ENCODE measurements at regions of chr15 and their contacts with region 1.

Region 1: DNA sequence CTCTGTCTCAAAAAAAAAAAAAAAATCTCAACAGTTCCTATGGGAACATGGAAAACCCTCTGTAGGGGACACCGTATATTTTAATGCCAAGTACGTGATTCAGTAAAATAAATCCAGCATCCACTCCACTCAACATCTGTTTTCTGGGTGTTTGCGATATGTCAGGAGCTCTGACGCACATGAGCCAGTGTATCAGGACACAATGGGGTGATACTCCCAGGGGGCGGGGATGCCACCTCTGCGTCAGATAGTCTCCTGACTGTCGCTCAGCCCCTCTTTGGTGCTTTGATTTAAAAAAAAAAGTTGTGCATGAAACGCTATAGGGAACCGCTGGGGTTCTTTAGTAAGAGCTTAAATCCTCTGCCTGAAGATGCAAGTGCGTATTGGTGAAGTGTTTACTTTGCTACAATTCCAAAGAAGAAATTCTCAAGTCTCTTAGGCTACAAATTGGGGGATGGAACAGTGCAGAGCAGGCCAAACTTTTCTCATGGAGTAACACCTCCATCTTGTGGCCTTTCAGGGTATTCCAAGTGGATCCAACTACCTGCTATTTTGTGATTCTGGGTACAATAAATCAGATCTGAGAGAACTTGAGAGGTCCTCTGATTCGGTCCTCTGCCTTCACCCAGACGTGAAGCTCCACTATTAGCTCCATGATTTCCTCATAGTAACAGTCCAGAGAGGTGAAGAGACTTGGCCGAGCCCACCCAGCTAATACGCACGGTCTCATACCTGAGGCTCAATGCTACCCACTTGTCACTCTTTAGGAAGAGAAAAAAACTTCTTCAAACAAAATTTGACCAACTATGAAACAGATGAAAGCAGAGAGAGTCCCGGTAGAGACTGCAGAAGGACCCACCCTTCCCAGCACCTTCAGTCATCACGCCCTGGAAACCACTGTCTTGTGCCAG is 9.3 kb upstream of the NR2E3 start:
- DNase-seq: peak; percentile 47
- ATAC-seq: peak; percentile 73
- H3K4me3 ChIP-seq: no peak overlapping the region
- H3K27ac ChIP-seq: no peak overlapping the region
- H3K4me1 ChIP-seq: no peaks in the 10 kb centered on the region
- H3K27me3 ChIP-seq: peaks cover 0 to 5% of the 10 kb centered on the region in 2 experiments; a peak in 2 of 5 replicates
- CTCF ChIP-seq: peak; percentile 79
- EP300 ChIP-seq: no peak
- POLR2A ChIP-seq: no peak
- RAD21 ChIP-seq: peak; percentile 73

Region 2: DNA sequence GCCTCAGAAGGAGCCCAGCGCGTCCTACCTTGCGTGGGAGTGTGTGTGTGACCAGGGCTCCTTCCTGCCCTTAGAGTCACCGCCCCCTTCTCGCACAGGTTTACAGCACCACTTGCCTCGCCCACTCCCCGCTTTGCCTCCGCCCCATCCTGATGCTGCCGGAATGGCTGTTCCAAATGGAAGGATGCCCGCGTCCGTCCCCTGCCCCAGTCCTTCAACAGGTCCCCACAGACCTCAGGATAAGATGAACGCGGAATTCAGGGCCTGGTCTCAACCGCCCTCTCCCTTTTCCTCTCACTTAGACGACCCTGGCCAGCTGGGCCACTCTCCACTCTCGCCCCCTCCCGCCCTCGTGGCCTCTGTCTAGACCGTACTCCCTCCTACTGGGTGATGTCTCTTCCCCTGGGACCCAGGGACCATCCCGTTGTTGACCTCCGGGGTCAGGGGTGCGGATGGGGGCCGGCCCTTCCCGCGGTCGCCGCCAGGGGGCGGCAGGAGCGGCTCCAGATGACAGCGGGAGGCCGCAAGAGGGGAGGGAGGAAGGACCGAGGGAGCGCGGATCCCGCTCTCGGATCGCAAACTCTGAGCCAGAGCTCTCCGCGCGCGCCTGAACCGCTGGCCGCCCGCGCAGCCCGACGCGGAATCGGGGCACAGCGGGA is 686.1 kb before region 1 on chr15 and contains the start of gene THSD4:
- CTCF ChIA-PET with region 1: interaction called, 3 read pairs
- POLR2A ChIA-PET with region 1: no interaction called
- in situ Hi-C with region 1: loop called (anchors 10 kb)
- intact Hi-C with region 1: no loop called
- DNase-seq: peak; percentile 25
- ATAC-seq: peak; percentile 92
- H3K4me3 ChIP-seq: peak within 1 kb of the TSS in 2 of 3 experiments; percentile 23 to 54; a peak in 2 of 6 replicates
- H3K27ac ChIP-seq: no peak within 1 kb of the TSS
- H3K4me1 ChIP-seq: no peaks in the 10 kb centered on the region
- H3K27me3 ChIP-seq: peaks cover 0 to 15% of the 10 kb centered on the region in 2 experiments; a peak in 4 of 5 replicates
- CTCF ChIP-seq: peak; percentile 88
- EP300 ChIP-seq: no peak
- POLR2A ChIP-seq: no peak
- RAD21 ChIP-seq: peak; percentile 77
- total RNA-seq, gene THSD4: 0.07 TPM in 2 replicates

Region 3: GRCh38 chr15:71448688-71449114 is 352.4 kb before region 1 on chr15:
- CTCF ChIA-PET with region 1: interaction called, 6 read pairs
- POLR2A ChIA-PET with region 1: no interaction called
- in situ Hi-C with region 1: loop called (anchors 5 kb)
- intact Hi-C with region 1: loop called (anchors 5 kb)
- DNase-seq: peak; percentile 51
- ATAC-seq: no peak; the same call in 2 of the 3 replicates
- H3K4me3 ChIP-seq: no peak overlapping the region
- H3K27ac ChIP-seq: no peak overlapping the region
- H3K4me1 ChIP-seq: peaks cover 54% of the 10 kb centered on the region
- H3K27me3 ChIP-seq: peaks cover 0 to 7% of the 10 kb centered on the region in 2 experiments; a peak in 2 of 5 replicates
- CTCF ChIP-seq: peak; percentile 88
- EP300 ChIP-seq: no peak
- POLR2A ChIP-seq: no peak
- RAD21 ChIP-seq: peak; percentile 66

Region 4: DNA sequence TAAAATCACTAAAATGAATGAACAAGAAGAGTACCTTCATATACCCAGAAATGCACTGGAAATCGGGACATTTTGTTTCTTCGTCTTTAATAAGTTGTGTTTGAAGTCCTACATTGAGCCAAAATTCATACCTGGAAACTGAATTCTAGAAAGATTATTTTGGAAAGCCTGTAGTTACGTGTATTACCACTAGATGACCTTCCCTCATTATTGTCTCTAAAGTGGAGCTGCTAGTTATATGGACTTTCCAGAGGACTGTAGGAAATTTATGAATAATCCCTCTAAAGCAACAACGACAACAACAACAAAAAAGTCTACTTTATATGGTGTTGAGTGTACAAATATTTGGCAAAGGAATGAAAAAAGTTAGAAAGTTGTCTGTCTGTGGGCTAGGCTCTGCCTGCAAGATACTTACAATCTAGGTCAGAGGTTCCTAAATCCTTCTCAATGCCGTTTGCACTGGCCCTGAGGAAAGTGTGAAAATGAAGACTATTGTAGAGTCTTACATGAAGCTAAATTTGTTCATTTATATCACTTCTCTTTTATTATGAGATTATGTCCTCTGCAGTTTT is 225.5 kb before region 1 on chr15:
- CTCF ChIA-PET with region 1: no interaction called
- POLR2A ChIA-PET with region 1: no interaction called
- in situ Hi-C with region 1: no loop called
- intact Hi-C with region 1: loop called (anchors 1 kb)
- DNase-seq: peak; percentile 10
- ATAC-seq: no peak
- H3K4me3 ChIP-seq: no peak overlapping the region
- H3K27ac ChIP-seq: no peak overlapping the region
- H3K4me1 ChIP-seq: no peaks in the 10 kb centered on the region
- H3K27me3 ChIP-seq: no peaks in the 10 kb centered on the region
- CTCF ChIP-seq: peak; percentile 63
- EP300 ChIP-seq: no peak
- POLR2A ChIP-seq: no peak
- RAD21 ChIP-seq: peak; percentile 28; the same call in 1 of the 2 replicates

Region 5: DNA sequence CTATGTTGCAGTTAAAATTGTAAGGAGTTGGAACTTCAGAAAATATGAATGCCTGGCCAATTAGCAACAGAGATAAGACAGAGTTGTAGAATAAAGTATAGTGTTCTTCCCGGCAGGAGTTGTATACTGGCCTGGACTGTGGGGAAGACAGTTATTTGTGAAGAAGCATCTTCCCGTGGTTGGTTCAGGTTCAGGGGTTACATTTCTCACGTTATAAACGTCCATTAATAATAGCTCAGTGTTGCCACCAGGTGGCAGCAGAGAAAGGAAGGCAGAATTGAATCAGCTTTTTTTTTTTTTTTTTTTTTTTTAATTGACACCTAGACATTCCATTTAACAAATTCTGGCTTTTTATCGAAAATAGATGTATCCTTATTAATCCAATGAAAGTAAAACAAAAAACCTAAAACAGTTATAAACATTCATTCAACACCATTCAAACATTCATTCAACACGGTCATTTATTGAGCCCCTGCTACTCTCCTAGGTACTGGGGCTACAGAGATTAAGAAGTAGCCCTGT is 57.2 kb before region 1 on chr15:
- CTCF ChIA-PET with region 1: interaction called, 26 read pairs
- POLR2A ChIA-PET with region 1: no interaction called
- in situ Hi-C with region 1: loop called (anchors 5 kb)
- intact Hi-C with region 1: loop called (anchors 1 kb)
- DNase-seq: peak; percentile 39
- ATAC-seq: no peak
- H3K4me3 ChIP-seq: no peak overlapping the region
- H3K27ac ChIP-seq: no peak overlapping the region
- H3K4me1 ChIP-seq: peaks cover 41% of the 10 kb centered on the region
- H3K27me3 ChIP-seq: peaks cover 0 to 25% of the 10 kb centered on the region in 2 experiments; a peak in 3 of 5 replicates
- CTCF ChIP-seq: peak; percentile 57
- EP300 ChIP-seq: no peak
- POLR2A ChIP-seq: no peak
- RAD21 ChIP-seq: no peak

Region 6: GRCh38 chr15:71752604-71753289 is 48.3 kb before region 1 on chr15:
- CTCF ChIA-PET with region 1: interaction called, 15 read pairs
- POLR2A ChIA-PET with region 1: no interaction called
- in situ Hi-C with region 1: loop called (anchors 5 kb)
- intact Hi-C with region 1: loop called (anchors 2 kb)
- DNase-seq: peak; percentile 44
- ATAC-seq: peak; percentile 71
- H3K4me3 ChIP-seq: no peak overlapping the region
- H3K27ac ChIP-seq: no peak overlapping the region
- H3K4me1 ChIP-seq: peaks cover 32% of the 10 kb centered on the region
- H3K27me3 ChIP-seq: no peaks in the 10 kb centered on the region
- CTCF ChIP-seq: peak; percentile 60
- EP300 ChIP-seq: no peak
- POLR2A ChIP-seq: no peak
- RAD21 ChIP-seq: peak; percentile 33; the same call in 1 of the 2 replicates

Region 7: GRCh38 chr15:71812966-71813722 is 12.1 kb after region 1 on chr15:
- CTCF ChIA-PET with region 1: no interaction called
- POLR2A ChIA-PET with region 1: no interaction called
- in situ Hi-C with region 1: no loop called
- intact Hi-C with region 1: no loop called
- DNase-seq: no peak
- ATAC-seq: no peak
- H3K4me3 ChIP-seq: no peak overlapping the region
- H3K27ac ChIP-seq: no peak overlapping the region
- H3K4me1 ChIP-seq: no peaks in the 10 kb centered on the region
- H3K27me3 ChIP-seq: peaks cover 15 to 35% of the 10 kb centered on the region in 2 experiments; a peak in 4 of 5 replicates
- CTCF ChIP-seq: no peak
- EP300 ChIP-seq: no peak
- POLR2A ChIP-seq: no peak
- RAD21 ChIP-seq: no peak

Region 8: GRCh38 chr15:71891026-71891425 is 89.9 kb after region 1 on chr15:
- CTCF ChIA-PET with region 1: no interaction called
- POLR2A ChIA-PET with region 1: no interaction called
- in situ Hi-C with region 1: no loop called
- intact Hi-C with region 1: no loop called
- DNase-seq: no peak
- ATAC-seq: no peak
- H3K4me3 ChIP-seq: no peak overlapping the region
- H3K27ac ChIP-seq: no peak overlapping the region
- H3K4me1 ChIP-seq: no peaks in the 10 kb centered on the region
- H3K27me3 ChIP-seq: no peaks in the 10 kb centered on the region
- CTCF ChIP-seq: no peak
- EP300 ChIP-seq: no peak
- POLR2A ChIP-seq: no peak
- RAD21 ChIP-seq: no peak

Region 9: GRCh38 chr15:72155635-72156616 is 354.8 kb after region 1 on chr15:
- CTCF ChIA-PET with region 1: interaction called, 12 read pairs
- POLR2A ChIA-PET with region 1: no interaction called
- in situ Hi-C with region 1: loop called (anchors 5 kb)
- intact Hi-C with region 1: loop called (anchors 1 kb)
- DNase-seq: peak; percentile 68
- ATAC-seq: peak; percentile 95
- H3K4me3 ChIP-seq: peak overlapping the region; percentile 46 to 71 (median 56)
- H3K27ac ChIP-seq: no peak overlapping the region
- H3K4me1 ChIP-seq: peaks cover 14% of the 10 kb centered on the region
- H3K27me3 ChIP-seq: peaks cover 0 to 14% of the 10 kb centered on the region in 2 experiments; a peak in 3 of 5 replicates
- CTCF ChIP-seq: peak; percentile 98
- EP300 ChIP-seq: no peak
- POLR2A ChIP-seq: no peak
- RAD21 ChIP-seq: peak; percentile 86